PC-9 (cell line): ENCODE measurements at regions of chr12 and their contacts with region 1.

Region 1: DNA sequence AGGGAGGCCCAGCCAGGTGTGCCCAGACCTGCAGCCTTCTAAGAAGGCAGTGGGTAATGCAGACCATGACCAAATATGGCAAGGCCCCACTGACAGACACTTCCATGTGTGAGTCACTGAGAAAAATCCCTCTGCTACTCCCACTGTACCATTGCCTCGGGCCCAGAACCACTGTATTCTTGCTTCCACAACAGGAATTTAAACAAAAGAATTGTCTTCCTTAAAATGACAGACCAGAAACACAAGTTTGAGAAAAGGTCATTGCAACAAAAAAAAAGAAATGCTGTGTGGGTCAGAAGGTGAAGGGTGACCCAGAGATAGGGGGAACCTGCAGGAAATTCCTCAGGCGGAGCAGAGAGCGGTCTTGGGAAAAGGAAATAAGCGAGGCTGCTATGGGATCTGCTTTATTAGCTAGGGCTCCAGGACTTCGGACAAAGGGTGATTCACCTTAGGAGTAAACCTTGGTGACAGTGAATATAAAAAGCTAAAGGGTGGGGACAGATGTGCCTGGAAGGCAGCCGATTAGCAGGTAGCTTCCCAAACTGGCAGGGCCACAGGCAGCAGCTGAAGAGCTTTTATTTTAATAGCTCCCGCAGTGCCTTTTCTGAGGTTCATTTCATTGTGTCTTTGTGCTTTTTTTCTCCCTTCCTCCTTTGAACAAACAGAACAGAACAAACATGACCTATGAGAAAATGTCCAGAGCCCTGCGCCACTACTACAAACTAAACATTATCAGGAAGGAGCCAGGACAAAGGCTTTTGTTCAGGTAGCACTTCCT is 185.3 kb upstream of the BCL2L14 start:
- DNase-seq: peak; percentile 89 to 99
- H3K4me3 ChIP-seq: peak overlapping the region; percentile 35; the same call in 1 of the 2 replicates
- H3K27ac ChIP-seq: peak overlapping the region; percentile 99
- H3K4me1 ChIP-seq: peaks cover 39% of the 10 kb centered on the region
- H3K27me3 ChIP-seq: no peaks in the 10 kb centered on the region
- CTCF ChIP-seq: no peak

Region 2: GRCh38 chr12:11929714-11930113 is 44.3 kb after region 1 on chr12:
- CTCF ChIA-PET with region 1: no interaction called
- POLR2A ChIA-PET with region 1: no interaction called
- intact Hi-C with region 1: loop called (anchors 1 kb)
- DNase-seq: no peak
- H3K4me3 ChIP-seq: no peak overlapping the region
- H3K27ac ChIP-seq: no peak overlapping the region
- H3K4me1 ChIP-seq: no peaks in the 10 kb centered on the region
- H3K27me3 ChIP-seq: no peaks in the 10 kb centered on the region
- CTCF ChIP-seq: no peak

Region 3: GRCh38 chr12:11949738-11950411 is 64.4 kb after region 1 on chr12:
- CTCF ChIA-PET with region 1: no interaction called
- POLR2A ChIA-PET with region 1: no interaction called
- intact Hi-C with region 1: no loop called
- DNase-seq: peak in 1 of 2 experiments; percentile 23
- H3K4me3 ChIP-seq: no peak overlapping the region
- H3K27ac ChIP-seq: no peak overlapping the region
- H3K4me1 ChIP-seq: peaks cover 10% of the 10 kb centered on the region
- H3K27me3 ChIP-seq: no peaks in the 10 kb centered on the region
- CTCF ChIP-seq: no peak